ENCODE measurements at regions of chr16 and their contacts with region 1.

Region 1: DNA sequence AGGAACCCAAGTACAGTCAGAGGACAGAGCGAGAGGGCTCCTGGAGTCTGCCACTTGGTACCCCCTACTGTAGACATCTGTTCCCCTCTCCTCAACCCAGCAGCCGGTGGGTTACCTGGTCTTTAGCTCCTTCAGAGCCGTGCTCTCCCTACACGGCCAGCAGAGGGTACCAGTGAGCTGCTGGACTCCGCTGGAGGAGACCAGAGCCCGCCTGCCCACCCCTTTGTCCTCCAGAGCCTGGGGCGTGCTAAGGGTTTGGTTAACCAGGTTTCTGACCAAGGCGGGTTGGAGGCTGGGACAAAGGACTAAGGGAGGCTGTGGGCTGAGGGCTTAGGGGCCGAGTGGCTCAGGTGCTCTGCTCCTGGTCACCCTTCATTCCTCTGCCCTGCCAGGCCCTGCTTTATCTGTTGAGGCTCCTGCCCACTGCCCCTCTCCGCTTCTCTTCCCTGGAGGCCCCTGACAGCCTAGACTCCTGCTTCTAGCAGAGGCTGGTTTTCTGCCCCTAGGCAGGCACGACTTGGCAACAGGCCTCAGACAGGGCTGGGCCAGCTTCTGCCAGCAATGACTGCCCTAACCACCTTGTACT is 2.7 kb upstream of the HSD11B2 start:
- DNase-seq: peak; percentile 73 to 91 (median 88)
- ATAC-seq: peak; percentile 79 to 81
- H3K4me3 ChIP-seq: no peak overlapping the region
- H3K27ac ChIP-seq: no peak overlapping the region
- H3K4me1 ChIP-seq: no peaks in the 10 kb centered on the region
- H3K27me3 ChIP-seq: no peaks in the 10 kb centered on the region

Region 2: GRCh38 chr16:67326472-67327309 is 101.5 kb before region 1 on chr16 and contains the starts of genes KCTD19 and LRRC36:
- intact Hi-C with region 1: no loop called
- DNase-seq: peak; percentile 76 to 90 (median 89)
- ATAC-seq: peak; percentile 89 to 91
- H3K4me3 ChIP-seq: peak within 1 kb of the TSS; percentile 58
- H3K27ac ChIP-seq: no peak within 1 kb of the TSS
- H3K4me1 ChIP-seq: peaks cover 2% of the 10 kb centered on the region
- H3K27me3 ChIP-seq: no peaks in the 10 kb centered on the region
- total RNA-seq, gene KCTD19: 0.06 TPM in 1 of 4 donors, not detected in the others
- total RNA-seq, gene LRRC36: 0.11 to 0.42 (median 0.29) TPM

Region 3: GRCh38 chr16:67456391-67457081 is 28.3 kb after region 1 on chr16:
- intact Hi-C with region 1: no loop called
- DNase-seq: peak; percentile 77 to 90 (median 87)
- ATAC-seq: peak in 1 of 2 donors; percentile 16
- H3K4me3 ChIP-seq: no peak overlapping the region
- H3K27ac ChIP-seq: no peak overlapping the region
- H3K4me1 ChIP-seq: peaks cover 40% of the 10 kb centered on the region
- H3K27me3 ChIP-seq: no peaks in the 10 kb centered on the region

Region 4: DNA sequence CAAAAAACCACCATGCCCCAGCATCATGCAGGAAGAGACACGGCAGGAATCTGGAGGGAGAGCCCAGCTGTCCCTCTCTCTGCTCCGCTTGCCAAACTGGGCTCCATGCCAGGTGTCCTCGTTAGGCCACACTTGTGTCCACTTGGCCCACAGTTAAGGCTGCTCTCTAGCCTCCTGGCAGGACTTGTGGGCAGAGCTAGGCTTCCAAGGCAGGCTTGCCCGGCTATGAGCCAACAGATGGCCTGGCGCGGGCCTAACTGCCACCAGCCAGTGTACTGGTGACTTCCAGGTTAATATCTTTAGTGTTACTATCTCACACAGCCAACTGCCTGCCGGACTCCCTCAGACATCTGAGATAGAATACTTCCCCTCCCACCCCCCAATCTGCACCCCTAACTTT is 42.1 kb after region 1 on chr16:
- intact Hi-C with region 1: loop called (anchors 1 to 5 kb)
- DNase-seq: peak; percentile 88 to 95 (median 94)
- ATAC-seq: peak; percentile 77 to 91
- H3K4me3 ChIP-seq: no peak overlapping the region
- H3K27ac ChIP-seq: no peak overlapping the region
- H3K4me1 ChIP-seq: peaks cover 14% of the 10 kb centered on the region
- H3K27me3 ChIP-seq: no peaks in the 10 kb centered on the region

Region 5: DNA sequence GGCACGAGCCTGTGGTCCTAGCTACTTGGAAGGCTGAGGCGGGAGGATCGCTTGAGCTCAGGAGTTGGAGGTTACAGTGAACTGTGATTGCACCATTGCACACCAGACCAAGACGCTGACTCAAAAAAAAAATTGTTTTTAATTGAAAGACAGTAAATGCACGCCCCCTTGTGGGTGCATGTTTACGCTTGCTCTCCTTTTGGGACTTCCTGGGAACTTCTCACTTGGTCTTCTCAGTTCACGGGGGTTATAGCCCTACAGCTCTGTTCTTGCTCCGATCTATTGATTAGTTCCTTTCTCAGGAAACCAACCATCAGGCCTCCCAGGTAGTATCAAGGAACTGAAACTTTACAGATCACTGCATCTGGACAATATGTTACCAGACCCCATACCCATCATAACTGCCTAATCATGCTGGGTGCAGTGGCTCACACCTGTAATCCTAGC is 86.2 kb after region 1 on chr16:
- intact Hi-C with region 1: loop called in 1 of 4 experiments (anchors 10 kb)
- DNase-seq: peak; percentile 84 to 93 (median 87)
- ATAC-seq: peak; percentile 53 to 59
- H3K4me3 ChIP-seq: no peak overlapping the region
- H3K27ac ChIP-seq: no peak overlapping the region
- H3K4me1 ChIP-seq: no peaks in the 10 kb centered on the region
- H3K27me3 ChIP-seq: no peaks in the 10 kb centered on the region